H1 (cell line): ENCODE measurements at regions of chr2 and their contacts with region 1.

Region 1: DNA sequence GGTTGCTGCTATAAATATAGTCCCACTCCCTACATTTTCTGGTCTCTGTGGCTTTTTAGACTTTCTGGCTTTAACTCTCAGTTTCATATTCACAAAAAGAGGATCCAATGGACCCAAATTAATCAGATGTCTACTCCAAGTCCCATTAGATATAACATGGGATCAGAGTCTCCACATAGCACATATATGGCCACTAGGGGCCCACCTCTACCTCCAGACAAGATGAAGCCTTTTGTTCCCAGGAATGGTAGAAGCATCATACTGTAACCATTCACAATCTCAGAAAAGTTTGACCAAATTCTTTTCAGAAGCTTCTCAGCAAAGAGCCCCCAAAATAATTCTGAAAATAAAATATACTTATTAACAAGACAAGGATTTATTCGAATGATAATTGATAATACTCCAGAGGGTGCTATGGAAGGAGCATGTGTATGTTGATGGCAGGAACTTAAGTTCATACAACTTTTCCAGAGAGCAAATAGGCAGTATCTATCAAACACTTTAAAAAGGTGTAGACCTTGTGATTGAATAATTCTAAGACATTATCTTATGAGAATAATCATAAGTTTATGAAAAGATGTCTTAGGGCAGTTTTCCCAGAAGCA is 382.3 kb upstream of the CRIM1 start:
- DNase-seq: no peak
- H3K4me3 ChIP-seq: no peak overlapping the region
- H3K27ac ChIP-seq: no peak overlapping the region
- H3K4me1 ChIP-seq: no peaks in the 10 kb centered on the region
- H3K27me3 ChIP-seq: no peaks in the 10 kb centered on the region
- CTCF ChIP-seq: peak in 2 of 3 experiments; percentile 52 to 71; a peak in 3 of 4 replicates
- EP300 ChIP-seq: no peak
- POLR2A ChIP-seq: no peak
- RAD21 ChIP-seq: peak; percentile 81 to 87

Region 2: DNA sequence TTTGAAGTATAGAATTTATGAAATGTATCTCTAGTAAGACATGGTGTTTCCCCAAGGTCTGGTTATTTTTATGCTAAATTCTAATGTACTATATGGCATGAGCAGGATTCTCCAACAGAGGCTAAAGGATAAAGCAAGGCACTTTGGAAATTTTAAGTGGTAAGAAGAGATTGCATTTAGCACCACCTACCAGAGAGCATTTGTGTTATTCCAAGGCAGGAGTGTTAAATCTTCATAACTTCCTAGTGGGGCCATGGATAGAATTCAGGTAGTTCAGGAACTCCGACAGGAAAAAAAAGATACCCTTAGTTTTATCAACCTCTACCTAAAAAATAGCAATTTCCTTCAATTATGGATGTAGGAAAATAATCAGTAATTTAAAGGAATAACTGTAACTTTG is 115.0 kb before region 1 on chr2:
- CTCF ChIA-PET with region 1: no interaction called
- POLR2A ChIA-PET with region 1: no interaction called
- DNase-seq: no peak
- H3K4me3 ChIP-seq: no peak overlapping the region
- H3K27ac ChIP-seq: no peak overlapping the region
- H3K4me1 ChIP-seq: peaks cover 0 to 4% (median 0%) of the 10 kb centered on the region in 4 experiments; a peak in 1 of 7 replicates
- H3K27me3 ChIP-seq: no peaks in the 10 kb centered on the region
- CTCF ChIP-seq: no peak
- EP300 ChIP-seq: no peak
- POLR2A ChIP-seq: no peak
- RAD21 ChIP-seq: no peak

Region 3: DNA sequence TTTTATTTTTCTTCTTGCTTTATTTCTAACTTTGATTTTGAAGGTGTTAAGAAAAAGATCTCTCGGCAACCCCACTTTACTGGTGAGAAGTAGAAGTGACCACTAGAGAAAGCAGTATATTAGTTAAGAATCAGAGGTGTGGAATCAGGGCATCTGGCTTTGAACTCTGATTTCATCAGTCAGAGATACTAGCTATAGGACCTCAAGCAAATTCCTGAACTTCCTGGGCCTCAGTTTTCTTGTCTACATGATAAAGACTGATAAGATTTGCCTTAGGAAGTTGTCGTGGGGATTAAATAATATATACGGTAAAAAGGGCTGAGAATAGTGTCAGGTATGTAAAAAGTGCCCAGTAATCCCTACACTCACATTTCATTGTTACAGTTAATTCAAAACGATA is 58.0 kb before region 1 on chr2:
- CTCF ChIA-PET with region 1: no interaction called
- POLR2A ChIA-PET with region 1: no interaction called
- DNase-seq: no peak
- H3K4me3 ChIP-seq: no peak overlapping the region
- H3K27ac ChIP-seq: no peak overlapping the region
- H3K4me1 ChIP-seq: no peaks in the 10 kb centered on the region
- H3K27me3 ChIP-seq: no peaks in the 10 kb centered on the region
- CTCF ChIP-seq: no peak
- EP300 ChIP-seq: no peak
- POLR2A ChIP-seq: no peak
- RAD21 ChIP-seq: no peak

Region 4: DNA sequence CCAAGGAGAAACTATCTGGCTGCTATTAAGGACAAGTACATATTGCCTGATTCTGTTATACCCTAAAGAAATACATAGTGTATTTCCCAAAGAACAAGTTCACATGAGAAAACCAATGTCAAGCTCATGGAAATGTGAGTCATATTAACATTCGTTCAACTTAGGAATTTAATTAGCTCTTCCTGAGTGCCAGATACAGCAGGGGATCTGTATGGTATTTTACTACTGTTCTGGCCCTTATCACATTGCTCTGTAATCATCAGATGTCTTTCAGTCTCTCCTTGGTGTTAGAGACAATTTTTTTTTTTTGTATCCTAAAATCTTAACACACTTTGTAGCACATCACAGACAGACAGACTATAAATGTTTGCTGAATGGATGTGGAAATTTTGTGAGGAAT is 12.6 kb before region 1 on chr2:
- CTCF ChIA-PET with region 1: interaction called, 17 read pairs
- POLR2A ChIA-PET with region 1: no interaction called
- DNase-seq: no peak
- H3K4me3 ChIP-seq: no peak overlapping the region
- H3K27ac ChIP-seq: no peak overlapping the region
- H3K4me1 ChIP-seq: no peaks in the 10 kb centered on the region
- H3K27me3 ChIP-seq: no peaks in the 10 kb centered on the region
- CTCF ChIP-seq: no peak
- EP300 ChIP-seq: no peak
- POLR2A ChIP-seq: no peak
- RAD21 ChIP-seq: no peak

Region 5: GRCh38 chr2:35989503-35989902 is 16.3 kb after region 1 on chr2:
- CTCF ChIA-PET with region 1: interaction called, 11 read pairs
- POLR2A ChIA-PET with region 1: no interaction called
- DNase-seq: peak in 1 of 2 experiments; percentile 31
- H3K4me3 ChIP-seq: no peak overlapping the region
- H3K27ac ChIP-seq: no peak overlapping the region
- H3K4me1 ChIP-seq: no peaks in the 10 kb centered on the region
- H3K27me3 ChIP-seq: no peaks in the 10 kb centered on the region
- CTCF ChIP-seq: no peak
- EP300 ChIP-seq: 0 out of 3 replicates have a peak, but pooled peaks of 1 of the 2 experiments have one; percentile 7
- POLR2A ChIP-seq: no peak
- RAD21 ChIP-seq: no peak

Region 6: DNA sequence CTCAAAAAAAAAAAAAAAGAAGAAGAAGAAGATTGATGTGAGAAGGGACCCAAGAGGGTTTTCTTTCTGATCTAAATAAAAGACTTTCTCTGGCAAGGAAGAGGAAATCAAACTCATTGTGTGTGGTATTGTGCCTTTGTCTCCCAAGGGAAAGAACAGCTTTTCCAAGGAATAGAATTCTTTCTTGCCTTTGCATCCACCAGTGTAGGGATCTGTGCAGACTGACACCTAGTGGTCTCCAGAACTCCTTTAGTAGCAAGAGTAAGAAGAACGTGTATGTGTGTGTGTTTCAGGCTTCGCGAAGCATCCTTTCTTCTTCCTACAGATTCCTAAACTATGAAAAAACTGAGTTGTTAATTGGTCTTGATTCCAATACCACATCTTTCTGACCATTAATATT is 348.9 kb after region 1 on chr2:
- CTCF ChIA-PET with region 1: interaction called, 11 read pairs
- POLR2A ChIA-PET with region 1: no interaction called
- DNase-seq: no peak
- H3K4me3 ChIP-seq: no peak overlapping the region
- H3K27ac ChIP-seq: no peak overlapping the region
- H3K4me1 ChIP-seq: no peaks in the 10 kb centered on the region
- H3K27me3 ChIP-seq: no peaks in the 10 kb centered on the region
- CTCF ChIP-seq: peak in 2 of 3 experiments; percentile 58 to 71; a peak in 3 of 4 replicates
- EP300 ChIP-seq: no peak
- POLR2A ChIP-seq: no peak
- RAD21 ChIP-seq: peak; percentile 79 to 80

Region 7: DNA sequence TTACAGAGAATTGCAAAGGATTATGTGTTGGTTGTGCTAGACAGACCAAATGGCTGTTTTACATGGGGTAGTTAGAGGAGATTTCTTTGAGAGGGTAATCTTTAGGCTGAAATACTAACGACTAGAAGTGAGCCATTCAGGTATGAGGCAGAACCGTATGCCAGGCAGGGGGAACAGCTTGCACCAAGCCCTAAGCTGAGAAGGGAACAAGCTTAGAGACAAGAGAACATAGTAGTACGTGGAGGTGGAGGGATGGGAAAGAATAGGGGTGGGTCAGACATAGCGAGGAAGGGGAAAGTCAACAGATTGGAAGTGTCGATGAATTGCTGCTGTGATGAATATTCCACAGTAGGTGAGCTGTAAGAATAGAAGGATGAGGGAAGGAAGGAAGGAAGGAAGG is 362.4 kb after region 1 on chr2:
- CTCF ChIA-PET with region 1: interaction called, 18 read pairs
- POLR2A ChIA-PET with region 1: no interaction called
- DNase-seq: no peak
- H3K4me3 ChIP-seq: no peak overlapping the region
- H3K27ac ChIP-seq: no peak overlapping the region
- H3K4me1 ChIP-seq: peaks cover 0 to 9% (median under 1%) of the 10 kb centered on the region in 4 experiments; a peak in 1 of 7 replicates
- H3K27me3 ChIP-seq: peaks cover 0 to 1% (median 0%) of the 10 kb centered on the region in 4 experiments; a peak in 1 of 7 replicates
- CTCF ChIP-seq: no peak
- EP300 ChIP-seq: no peak
- POLR2A ChIP-seq: no peak
- RAD21 ChIP-seq: no peak